ENCODE measurements at regions of chr16 and their contacts with region 1.

Region 1: GRCh38 chr16:19717771-19718602 is at the starts of genes IQCK and KNOP1:
- DNase-seq: peak; percentile 79 to 92 (median 87)
- ATAC-seq: peak; percentile 97
- H3K4me3 ChIP-seq: peak within 1 kb of the TSS; percentile 90
- H3K4me3 Mint-ChIP-seq: peak within 1 kb of the TSS; percentile 90 to 97 (median 95)
- H3K27ac ChIP-seq: peak within 1 kb of the TSS; percentile 77
- H3K27ac Mint-ChIP-seq: peak within 1 kb of the TSS; percentile 63 to 89 (median 83)
- H3K4me1 ChIP-seq: peaks cover 0 to 7% of the 10 kb centered on the region in 2 donors
- H3K4me1 Mint-ChIP-seq: peaks cover 16 to 62% (median 48%) of the 10 kb centered on the region in 7 donors
- H3K27me3 ChIP-seq: no peaks in the 10 kb centered on the region
- H3K27me3 Mint-ChIP-seq: no peaks in the 10 kb centered on the region
- total RNA-seq, gene IQCK: 0.48 to 4.1 (median 2.6) TPM
- total RNA-seq, gene KNOP1: 6.4 to 20.6 (median 18.5) TPM

Region 2: DNA sequence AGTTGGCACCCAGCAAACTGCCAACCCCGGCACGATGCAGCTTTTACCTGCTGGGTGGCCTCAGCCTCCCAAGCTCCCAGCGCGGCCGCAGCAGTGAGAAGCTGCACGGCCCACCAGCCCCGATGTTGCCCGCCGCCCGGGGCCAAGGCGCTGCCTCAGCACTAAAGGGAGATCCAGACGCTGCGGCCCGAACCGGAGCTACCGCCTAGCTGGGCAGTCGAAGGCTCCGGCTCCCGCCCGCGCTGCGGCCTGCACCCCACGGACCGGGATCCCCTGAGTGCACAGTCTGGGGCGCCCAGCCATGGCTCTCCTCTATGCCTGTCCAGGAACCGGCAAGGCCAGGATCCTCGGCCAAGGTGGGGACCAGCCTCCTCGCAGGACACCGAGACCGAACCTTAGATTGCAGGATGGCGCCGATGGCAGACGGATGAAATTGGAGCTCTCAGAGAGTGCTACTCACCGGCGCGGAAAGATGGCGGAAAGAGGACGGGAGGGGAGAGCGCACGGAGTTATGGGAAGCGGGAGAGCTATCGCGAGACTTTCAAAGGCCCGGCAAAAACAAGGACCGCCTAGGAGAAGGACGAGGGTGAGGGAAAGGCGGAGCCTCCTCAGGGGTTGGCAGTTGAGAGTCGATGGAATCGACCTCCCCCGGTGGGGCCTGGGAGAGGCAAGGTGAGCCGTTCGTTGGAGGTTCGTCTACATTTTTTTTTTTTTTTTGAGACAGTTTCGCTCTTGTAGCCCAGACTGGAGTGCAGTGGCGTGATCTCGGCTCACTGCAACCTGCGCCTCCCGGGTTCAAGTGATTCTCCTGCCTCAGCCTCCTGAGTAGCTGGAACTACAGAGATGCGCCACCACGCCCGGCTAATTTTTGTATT is 927.9 kb before region 1 on chr16 and contains the start of gene RPS15A:
- CTCF ChIA-PET with region 1: no interaction called
- POLR2A ChIA-PET with region 1: no interaction called
- intact Hi-C with region 1: loop called in 1 of 2 experiments (anchors 5 kb)
- DNase-seq: peak; percentile 72 to 97 (median 91)
- ATAC-seq: peak; percentile 98
- H3K4me3 ChIP-seq: peak within 1 kb of the TSS; percentile 98
- H3K4me3 Mint-ChIP-seq: peak within 1 kb of the TSS; percentile 92 to 99 (median 96)
- H3K27ac ChIP-seq: peak within 1 kb of the TSS; percentile 91
- H3K27ac Mint-ChIP-seq: peak within 1 kb of the TSS; percentile 89 to 96 (median 94)
- H3K4me1 ChIP-seq: peaks cover 22 to 43% of the 10 kb centered on the region in 2 donors
- H3K4me1 Mint-ChIP-seq: peaks cover 35 to 63% (median 50%) of the 10 kb centered on the region in 7 donors
- H3K27me3 ChIP-seq: no peaks in the 10 kb centered on the region
- H3K27me3 Mint-ChIP-seq: peaks cover 0 to 2% (median 0%) of the 10 kb centered on the region in 5 donors
- total RNA-seq, gene RPS15A: 2,060 to 3,897 (median 3,815) TPM

Region 3: DNA sequence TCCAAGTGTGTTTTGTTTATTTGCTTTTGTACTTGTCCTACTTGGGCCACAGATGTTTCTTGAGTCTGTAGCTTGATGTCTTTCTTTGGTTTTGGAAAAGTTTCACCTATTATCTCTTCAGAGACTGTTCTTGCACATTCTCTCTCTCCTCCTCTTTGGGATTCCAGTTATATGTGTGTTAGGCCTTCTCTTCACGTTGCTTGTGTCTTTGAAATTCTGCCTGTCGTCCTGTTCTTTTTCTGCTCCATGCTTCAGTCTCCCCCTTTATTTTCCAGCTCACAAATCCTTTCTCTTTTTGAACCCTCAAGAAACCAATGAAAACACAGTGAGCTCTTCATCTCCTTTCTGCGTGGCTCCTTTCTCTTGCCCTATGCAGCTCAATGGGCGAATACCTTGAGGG is 154.6 kb before region 1 on chr16:
- CTCF ChIA-PET with region 1: interaction called, 11 read pairs
- POLR2A ChIA-PET with region 1: no interaction called
- intact Hi-C with region 1: no loop called
- DNase-seq: no peak
- ATAC-seq: no peak
- H3K4me3 ChIP-seq: no peak overlapping the region
- H3K4me3 Mint-ChIP-seq: no peak overlapping the region
- H3K27ac ChIP-seq: no peak overlapping the region
- H3K27ac Mint-ChIP-seq: no peak overlapping the region
- H3K4me1 ChIP-seq: no peaks in the 10 kb centered on the region
- H3K4me1 Mint-ChIP-seq: peaks cover 0 to 10% (median 6%) of the 10 kb centered on the region in 7 donors
- H3K27me3 ChIP-seq: no peaks in the 10 kb centered on the region
- H3K27me3 Mint-ChIP-seq: no peaks in the 10 kb centered on the region

Region 4: DNA sequence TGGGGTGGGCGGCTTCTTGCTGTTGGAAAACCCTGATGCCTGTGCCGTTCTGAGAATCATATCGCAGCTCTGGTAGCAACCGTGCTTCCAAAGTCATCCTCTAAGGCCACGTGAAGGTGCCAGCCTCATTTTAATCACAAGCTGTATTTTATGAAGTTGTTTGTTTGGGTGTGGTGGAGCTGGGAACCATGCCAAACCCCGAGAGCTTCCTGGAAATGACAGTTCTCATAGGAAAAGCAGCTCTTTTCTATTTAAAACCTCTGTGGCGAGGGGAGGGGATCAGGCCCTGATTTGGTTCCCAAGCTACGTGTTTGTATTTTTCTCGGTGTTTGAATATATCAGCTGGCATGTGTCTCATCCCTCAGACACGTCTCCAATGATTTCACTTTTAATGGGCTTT is 21.7 kb before region 1 on chr16:
- CTCF ChIA-PET with region 1: no interaction called
- POLR2A ChIA-PET with region 1: interaction called, 8 read pairs
- intact Hi-C with region 1: loop called in 1 of 2 experiments (anchors 1 kb)
- DNase-seq: peak in 7 of 9 donors; percentile 48 to 86 (median 81)
- ATAC-seq: peak; percentile 72
- H3K4me3 ChIP-seq: peak overlapping the region; percentile 39
- H3K4me3 Mint-ChIP-seq: peak overlapping the region; percentile 37 to 85 (median 74)
- H3K27ac ChIP-seq: peak overlapping the region; percentile 59
- H3K27ac Mint-ChIP-seq: peak overlapping the region; percentile 76 to 97 (median 96)
- H3K4me1 ChIP-seq: peaks cover 34 to 50% of the 10 kb centered on the region in 2 donors
- H3K4me1 Mint-ChIP-seq: peaks cover 32 to 82% (median 68%) of the 10 kb centered on the region in 7 donors
- H3K27me3 ChIP-seq: no peaks in the 10 kb centered on the region
- H3K27me3 Mint-ChIP-seq: no peaks in the 10 kb centered on the region

Region 5: DNA sequence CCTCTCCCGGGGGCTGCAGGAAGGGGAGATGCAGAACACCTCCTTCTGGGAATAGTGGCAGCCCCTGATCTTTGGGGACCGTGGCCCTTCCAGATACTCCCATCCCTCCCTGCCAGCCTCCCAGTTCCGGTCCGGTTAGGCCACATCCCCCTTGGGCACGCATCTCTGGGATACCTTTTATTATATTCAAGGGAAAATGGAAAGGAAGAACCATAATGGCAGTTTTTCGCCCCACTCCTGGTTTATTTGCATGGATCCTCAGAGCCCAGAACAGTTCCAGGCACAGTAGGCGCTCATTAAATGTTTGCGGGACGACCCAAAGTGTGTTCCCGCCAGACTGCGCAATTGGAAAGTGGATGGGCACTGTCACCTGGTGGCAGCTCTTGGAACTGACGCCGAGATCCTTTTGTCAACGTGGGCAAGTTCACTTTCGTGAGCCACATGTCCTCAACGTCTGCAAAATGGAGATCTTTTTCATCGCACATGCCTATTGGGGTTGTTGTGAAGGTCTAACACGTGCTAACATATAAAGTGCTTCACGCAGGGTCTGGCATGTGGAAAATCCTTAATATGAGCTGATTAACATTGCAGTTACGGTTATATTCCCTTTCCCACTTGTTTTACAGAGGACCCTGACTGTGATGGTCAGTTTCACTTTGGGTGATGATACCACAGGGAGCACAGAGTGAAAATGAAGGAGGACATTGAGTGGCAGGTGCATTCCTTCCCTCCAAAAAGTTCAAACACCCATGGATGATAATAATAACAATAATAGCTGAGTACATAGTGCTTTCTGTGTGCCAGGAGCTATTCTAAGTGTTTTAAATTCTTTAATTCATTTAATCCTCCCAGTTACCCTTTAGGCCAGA is 168.3 kb after region 1 on chr16:
- CTCF ChIA-PET with region 1: no interaction called
- POLR2A ChIA-PET with region 1: no interaction called
- intact Hi-C with region 1: loop called (anchors 2 kb)
- DNase-seq: peak; percentile 66 to 85 (median 78)
- ATAC-seq: peak; percentile 78
- H3K4me3 ChIP-seq: peak overlapping the region; percentile 70
- H3K4me3 Mint-ChIP-seq: peak overlapping the region; percentile 84 to 96 (median 90)
- H3K27ac ChIP-seq: no peak overlapping the region
- H3K27ac Mint-ChIP-seq: peak overlapping the region in 6 of 9 donors; percentile 17 to 72 (median 52)
- H3K4me1 ChIP-seq: peaks cover 9 to 23% of the 10 kb centered on the region in 2 donors
- H3K4me1 Mint-ChIP-seq: peaks cover 12 to 26% (median 22%) of the 10 kb centered on the region in 7 donors
- H3K27me3 ChIP-seq: peaks cover 0 to 12% of the 10 kb centered on the region in 2 donors
- H3K27me3 Mint-ChIP-seq: peaks cover 4 to 39% (median 13%) of the 10 kb centered on the region in 5 donors

Measured in naive thymus-derived CD4-positive, alpha-beta T cell (primary cell).